ENCODE measurements at regions of chr6 and their contacts with region 1.

Region 1: DNA sequence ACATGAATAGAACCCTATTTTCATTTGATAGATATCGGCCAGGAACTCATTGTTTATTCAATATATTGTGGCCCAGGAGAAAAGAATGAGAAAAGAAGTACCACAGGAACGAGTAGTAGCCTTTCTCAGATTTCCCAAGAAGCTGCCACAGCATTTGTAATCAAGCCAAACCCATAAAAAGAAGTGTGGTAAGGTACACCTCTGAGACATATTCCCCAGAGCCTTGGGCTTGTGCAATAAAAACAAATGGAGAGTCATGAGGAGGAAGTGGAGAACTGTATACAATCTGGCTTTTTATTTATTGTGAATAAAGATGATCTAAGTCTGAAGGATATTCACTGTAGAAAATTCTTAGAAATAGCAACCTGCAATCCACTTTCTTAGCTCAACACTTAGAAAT is 36.7 kb downstream of the KIF6 start:
- DNase-seq: no peak
- ATAC-seq: peak; percentile 53
- H3K4me3 ChIP-seq: no peak overlapping the region
- H3K27ac ChIP-seq: no peak overlapping the region
- H3K4me1 ChIP-seq: no peaks in the 10 kb centered on the region; the same call in 1 of the 2 replicates
- H3K27me3 ChIP-seq: no peaks in the 10 kb centered on the region
- CTCF ChIP-seq: no peak
- EP300 ChIP-seq: no peak
- POLR2A ChIP-seq: no peak
- RAD21 ChIP-seq: no peak

Region 2: DNA sequence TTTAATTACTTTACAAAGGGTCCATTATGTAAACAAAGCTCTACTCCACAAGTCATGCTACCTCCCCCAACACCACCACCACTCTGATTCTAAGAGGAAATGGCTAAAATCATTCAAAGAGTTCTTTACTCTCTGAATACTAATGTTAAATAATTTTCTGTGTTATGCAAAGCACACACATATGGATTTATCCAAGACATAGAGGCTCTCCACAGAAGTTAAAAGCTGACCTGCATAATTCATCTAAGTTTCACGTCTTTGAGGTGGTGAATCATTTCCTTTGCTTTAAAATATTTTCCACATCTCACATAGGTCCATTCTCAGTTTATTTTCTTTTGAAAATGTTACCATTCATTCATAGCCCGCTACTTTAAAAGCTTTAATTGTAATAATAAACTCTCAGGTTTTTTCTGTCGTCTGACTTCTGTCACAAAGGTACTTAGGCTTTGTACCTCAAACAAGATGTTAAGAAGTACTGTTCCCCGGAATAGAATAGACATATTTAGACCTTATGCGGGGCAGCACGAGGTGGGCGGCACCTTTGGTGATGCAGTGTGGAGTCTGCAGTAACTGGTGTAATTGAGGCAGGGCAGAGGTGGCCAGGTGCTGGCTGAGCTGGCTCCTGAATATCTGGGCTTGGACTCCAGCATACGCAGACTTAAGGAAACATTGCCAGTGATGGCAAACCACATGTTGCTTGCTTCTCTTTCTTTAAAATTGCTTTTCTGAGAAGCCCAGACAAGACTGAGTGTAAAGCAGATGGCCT is 19.1 kb before region 1 on chr6:
- CTCF ChIA-PET with region 1: interaction called, 3 read pairs
- POLR2A ChIA-PET with region 1: interaction called, 3 read pairs
- RAD21 ChIA-PET with region 1: interaction called, 4 read pairs
- SMC1A ChIA-PET with region 1: interaction called, 23 read pairs
- in situ Hi-C with region 1: no loop called
- intact Hi-C with region 1: no loop called
- DNase-seq: no peak
- ATAC-seq: peak; percentile 36
- H3K4me3 ChIP-seq: no peak overlapping the region
- H3K27ac ChIP-seq: no peak overlapping the region
- H3K4me1 ChIP-seq: no peaks in the 10 kb centered on the region
- H3K27me3 ChIP-seq: no peaks in the 10 kb centered on the region
- CTCF ChIP-seq: no peak
- EP300 ChIP-seq: no peak
- POLR2A ChIP-seq: no peak
- RAD21 ChIP-seq: no peak